ENCODE measurements at regions of chr7 and their contacts with region 1.

Region 1: DNA sequence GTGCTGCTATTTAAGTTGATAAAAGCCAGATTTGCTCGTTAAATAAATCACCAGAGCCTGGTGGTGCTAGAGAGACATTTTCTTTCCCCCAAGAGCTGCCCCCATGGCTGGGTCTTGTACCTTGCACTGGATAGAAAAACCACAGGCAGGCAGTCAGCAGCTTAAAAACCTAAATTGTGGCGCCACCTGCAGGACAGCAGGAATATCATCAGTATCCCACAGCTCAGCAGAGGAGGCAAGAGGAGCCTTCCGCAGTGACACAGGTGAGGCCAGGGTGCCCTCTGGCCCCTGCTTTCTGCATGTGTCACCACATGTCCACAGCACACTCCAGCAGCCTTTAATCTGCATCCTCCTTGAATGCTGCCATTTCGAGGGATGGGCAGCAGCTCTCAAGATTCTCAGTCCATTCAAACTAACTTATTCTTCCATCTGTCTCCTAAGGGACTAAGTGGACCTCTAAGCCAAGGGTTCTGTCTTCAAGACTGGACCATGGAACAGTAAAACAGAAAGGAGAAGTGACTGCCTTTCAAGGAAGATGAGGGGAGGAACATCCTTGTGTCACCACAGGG is 4.5 kb upstream of the PLXNA4 start:
- DNase-seq: peak; percentile 60
- ATAC-seq: peak; percentile 49

Region 2: GRCh38 chr7:131945313-131945911 is 635.4 kb before region 1 on chr7:
- intact Hi-C with region 1: loop called (anchors 10 kb)
- DNase-seq: peak; percentile 75
- ATAC-seq: peak; percentile 74

Region 3: GRCh38 chr7:132318352-132319318 is 262.2 kb before region 1 on chr7:
- intact Hi-C with region 1: loop called (anchors 2 kb)
- DNase-seq: peak; percentile 87
- ATAC-seq: peak; percentile 91

Region 4: DNA sequence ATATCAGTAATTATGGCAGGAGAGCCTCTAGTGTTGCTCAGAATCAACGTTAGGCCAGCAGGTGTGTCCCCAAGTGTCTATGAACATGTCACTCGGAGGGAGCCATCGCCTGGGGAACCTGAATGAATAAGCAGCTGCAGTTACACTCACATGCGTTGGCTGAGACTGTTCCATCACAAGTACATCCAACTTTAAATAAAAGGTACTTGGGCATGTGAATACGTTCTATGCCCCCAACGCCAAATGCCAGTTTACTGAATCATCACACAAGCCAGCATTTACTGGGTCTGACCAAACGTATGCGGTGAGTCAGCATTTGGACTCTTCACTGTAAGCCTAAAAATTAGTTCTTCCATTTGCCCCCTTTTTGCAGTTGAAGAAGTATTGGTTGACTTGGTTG is 203.0 kb after region 1 on chr7:
- intact Hi-C with region 1: no loop called
- DNase-seq: no peak
- ATAC-seq: no peak